Keratinocyte (primary cell): ENCODE measurements at regions of chr5 and their contacts with region 1.

Region 1: GRCh38 chr5:142304013-142304701 is 20.7 kb downstream of the SPRY4 start:
- DNase-seq: no peak
- H3K4me3 ChIP-seq: no peak overlapping the region
- H3K27ac ChIP-seq: no peak overlapping the region
- H3K4me1 ChIP-seq: no peaks in the 10 kb centered on the region
- H3K27me3 ChIP-seq: no peaks in the 10 kb centered on the region
- CTCF ChIP-seq: no peak

Region 2: DNA sequence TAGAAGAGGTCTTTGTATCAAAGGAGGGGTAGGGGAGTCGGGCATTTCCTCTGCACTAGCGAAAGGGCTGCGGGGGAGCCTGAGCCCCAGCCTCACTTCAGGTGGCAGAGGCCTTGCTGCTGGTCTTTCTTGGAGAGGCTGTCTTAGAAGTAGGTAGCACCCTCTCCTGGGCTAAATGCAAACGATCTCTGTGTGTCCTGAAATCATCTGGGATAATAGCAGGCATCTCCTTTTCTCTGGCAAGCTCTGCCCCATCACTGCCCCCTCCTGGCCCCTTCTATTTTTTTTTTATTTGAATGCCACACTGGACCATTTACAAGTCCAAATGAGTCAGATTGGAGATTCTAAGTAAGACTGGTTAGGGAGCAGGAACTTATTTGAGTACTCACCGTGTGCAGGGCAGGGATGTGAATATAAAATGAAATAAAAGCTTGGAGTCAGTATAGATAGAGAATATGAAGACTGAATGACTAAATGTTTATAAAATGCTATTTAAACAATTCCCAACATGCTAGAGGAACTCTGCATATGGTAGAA is 244.7 kb after region 1 on chr5:
- dilution Hi-C with region 1: loop called (anchors 5 kb)
- DNase-seq: peak; percentile 79
- H3K4me3 ChIP-seq: no peak overlapping the region
- H3K27ac ChIP-seq: no peak overlapping the region
- H3K4me1 ChIP-seq: peaks cover 42% of the 10 kb centered on the region
- H3K27me3 ChIP-seq: no peaks in the 10 kb centered on the region
- CTCF ChIP-seq: peak; percentile 75 to 95 (median 81)

Region 3: GRCh38 chr5:142630927-142631539 is 326.9 kb after region 1 on chr5:
- dilution Hi-C with region 1: no loop called
- DNase-seq: no peak
- H3K4me3 ChIP-seq: no peak overlapping the region
- H3K27ac ChIP-seq: no peak overlapping the region
- H3K4me1 ChIP-seq: peaks cover 5% of the 10 kb centered on the region
- H3K27me3 ChIP-seq: no peaks in the 10 kb centered on the region
- CTCF ChIP-seq: no peak